ENCODE measurements at regions of chr19 and their contacts with region 1.

Region 1: GRCh38 chr19:33186431-33187182 is 7.5 kb upstream of the LRP3 start:
- DNase-seq: no peak
- H3K4me3 ChIP-seq: no peak overlapping the region
- H3K27ac ChIP-seq: no peak overlapping the region
- H3K4me1 ChIP-seq: no peaks in the 10 kb centered on the region
- H3K27me3 ChIP-seq: 0 out of 2 replicates have a peak, but pooled peaks cover 6% of the 10 kb centered on the region
- CTCF ChIP-seq: no peak

Region 2: DNA sequence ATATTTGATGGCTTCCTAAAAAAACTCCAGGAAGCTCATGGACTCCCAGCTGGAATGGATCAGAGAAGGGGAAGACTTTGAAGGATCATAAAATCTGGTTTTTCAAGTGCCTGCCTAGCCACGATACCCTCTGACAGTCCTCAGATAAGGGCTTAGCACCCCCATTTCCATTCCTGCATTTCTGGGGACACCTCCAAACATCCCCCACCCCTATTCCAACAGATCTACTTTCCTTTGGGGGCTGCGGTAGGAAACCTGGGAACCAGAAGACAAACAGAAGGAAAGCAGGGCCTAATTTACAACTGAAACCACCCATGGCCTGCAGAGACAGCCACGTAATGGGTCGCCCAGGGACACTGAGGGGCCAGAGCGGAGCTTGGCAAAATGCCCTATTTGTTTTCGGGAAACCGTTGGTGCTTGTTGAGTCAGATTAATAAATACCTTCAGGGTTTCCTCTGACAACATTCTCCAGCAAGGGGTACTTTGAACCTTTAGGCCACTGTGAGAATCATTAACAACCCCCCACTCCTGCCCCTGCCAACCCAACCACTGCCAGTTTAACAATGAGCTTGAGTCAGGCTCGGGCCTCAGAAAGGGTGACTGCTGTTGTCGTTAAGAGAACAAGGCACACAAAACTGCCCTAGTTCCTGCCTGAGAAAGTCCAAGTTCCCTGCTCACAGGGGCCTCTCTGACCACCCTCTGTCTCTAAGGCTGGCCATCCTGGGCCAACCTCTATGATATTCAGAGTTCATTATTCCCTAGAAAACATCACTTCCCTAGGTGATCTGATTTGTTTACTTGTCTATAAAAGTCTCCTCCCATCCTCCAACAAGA is 145.4 kb before region 1 on chr19:
- CTCF ChIA-PET with region 1: interaction called, 10 read pairs
- POLR2A ChIA-PET with region 1: no interaction called
- intact Hi-C with region 1: no loop called
- DNase-seq: peak; percentile 86 to 97
- H3K4me3 ChIP-seq: peak overlapping the region; percentile 36; the same call in 1 of the 2 replicates
- H3K27ac ChIP-seq: peak overlapping the region; percentile 98
- H3K4me1 ChIP-seq: peaks cover 62% of the 10 kb centered on the region
- H3K27me3 ChIP-seq: no peaks in the 10 kb centered on the region
- CTCF ChIP-seq: no peak

Region 3: DNA sequence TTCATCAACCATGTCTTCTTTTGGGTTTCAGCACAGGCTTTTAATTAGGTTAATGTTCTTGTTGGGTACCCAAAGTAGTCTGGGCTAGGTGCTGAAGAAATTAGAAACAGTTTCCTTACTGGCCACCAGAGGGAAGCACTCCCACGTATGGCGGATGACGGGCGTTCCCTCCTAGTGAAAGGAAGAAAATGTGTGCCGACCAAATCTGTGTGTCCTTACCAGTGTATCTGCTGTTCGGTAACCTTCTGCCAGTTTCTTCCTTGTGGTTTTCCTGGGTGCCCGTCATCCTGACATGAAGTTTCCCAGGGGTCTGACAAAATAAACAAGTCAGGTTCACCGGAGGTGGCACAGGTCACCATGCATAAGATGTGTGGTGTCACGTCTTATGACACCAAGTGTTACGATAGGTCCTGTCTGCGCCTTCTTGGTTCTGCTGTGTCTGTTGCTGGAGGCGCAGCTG is 60.6 kb before region 1 on chr19:
- CTCF ChIA-PET with region 1: interaction called, 5 read pairs
- POLR2A ChIA-PET with region 1: interaction called, 5 read pairs
- intact Hi-C with region 1: loop called (anchors 1 kb)
- DNase-seq: peak; percentile 45 to 48
- H3K4me3 ChIP-seq: no peak overlapping the region
- H3K27ac ChIP-seq: no peak overlapping the region
- H3K4me1 ChIP-seq: no peaks in the 10 kb centered on the region
- H3K27me3 ChIP-seq: no peaks in the 10 kb centered on the region
- CTCF ChIP-seq: peak; percentile 86

Region 4: GRCh38 chr19:33143897-33144405 is 42.7 kb before region 1 on chr19:
- CTCF ChIA-PET with region 1: interaction called, 7 read pairs
- POLR2A ChIA-PET with region 1: no interaction called
- intact Hi-C with region 1: loop called (anchors 2 kb)
- DNase-seq: peak in 1 of 2 experiments; percentile 48
- H3K4me3 ChIP-seq: no peak overlapping the region
- H3K27ac ChIP-seq: no peak overlapping the region
- H3K4me1 ChIP-seq: no peaks in the 10 kb centered on the region
- H3K27me3 ChIP-seq: no peaks in the 10 kb centered on the region
- CTCF ChIP-seq: peak; percentile 94